Panc1 (cell line): ENCODE measurements at regions of chr11 and their contacts with region 1.

Region 1: DNA sequence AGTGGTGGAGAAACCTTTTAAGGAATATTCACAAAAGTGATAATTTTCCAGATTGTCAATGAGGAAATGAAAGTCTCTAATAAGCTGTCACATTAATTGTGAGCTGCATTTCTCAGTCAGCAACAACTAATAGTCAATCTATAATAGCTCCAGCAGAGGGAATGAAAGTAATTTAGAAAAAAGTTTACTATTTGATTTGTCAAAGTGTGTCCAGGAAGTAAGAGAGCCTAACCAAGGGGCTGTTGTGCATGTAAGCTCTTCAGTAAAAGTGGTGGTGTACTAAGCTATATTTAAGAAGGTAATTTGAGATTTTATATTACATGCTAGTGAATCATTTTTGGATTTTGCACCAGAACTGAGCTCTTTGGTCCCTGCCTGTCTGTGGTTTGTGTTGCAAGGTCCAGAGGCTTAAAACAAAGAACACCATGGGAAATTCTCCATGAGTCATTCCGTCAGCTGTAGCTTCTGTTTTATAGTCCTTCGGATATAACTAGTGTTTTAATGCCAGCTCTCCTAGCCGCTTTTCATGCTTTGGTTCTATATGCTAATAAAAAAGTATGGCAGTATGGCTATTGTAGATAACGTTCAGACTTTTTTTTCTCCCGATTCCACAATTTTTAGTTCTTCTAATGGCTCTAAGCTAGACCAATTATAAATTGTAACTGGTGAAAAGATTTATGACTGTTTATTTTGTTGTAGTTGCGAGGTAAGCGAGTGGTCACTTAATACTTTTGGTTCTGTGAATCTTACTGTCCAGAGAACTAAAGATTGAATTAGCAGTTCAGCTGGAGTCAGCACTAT is 64.6 kb downstream of the ARHGEF12 start:
- DNase-seq: peak; percentile 81
- ATAC-seq: peak; percentile 95
- H3K4me3 ChIP-seq: peak overlapping the region; percentile 39 to 45
- H3K27ac ChIP-seq: peak overlapping the region; percentile 99
- H3K4me1 ChIP-seq: peaks cover 92% of the 10 kb centered on the region
- H3K27me3 ChIP-seq: no peaks in the 10 kb centered on the region
- CTCF ChIP-seq: no peak

Region 2: DNA sequence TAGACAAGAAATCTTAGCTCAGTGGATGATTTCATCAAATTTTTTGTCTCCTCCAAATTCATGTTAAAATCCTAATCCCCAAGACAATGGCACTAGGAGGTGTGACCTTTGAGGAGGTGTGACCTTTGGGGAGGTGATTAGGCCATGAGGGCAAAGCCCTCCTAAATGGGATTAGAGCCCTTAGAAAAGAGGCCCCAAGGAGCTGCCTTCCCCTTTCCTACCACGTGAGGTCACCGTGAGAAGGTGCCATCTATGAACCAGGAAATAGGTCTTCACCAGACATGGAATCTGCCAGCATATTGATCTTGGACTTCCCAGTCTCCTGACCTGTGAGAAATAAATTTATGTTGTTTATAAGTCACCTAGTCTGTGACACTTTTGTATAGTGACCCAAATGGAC is 401.5 kb before region 1 on chr11:
- CTCF ChIA-PET with region 1: no interaction called
- POLR2A ChIA-PET with region 1: no interaction called
- in situ Hi-C with region 1: no loop called
- intact Hi-C with region 1: no loop called
- DNase-seq: no peak
- ATAC-seq: no peak
- H3K4me3 ChIP-seq: no peak overlapping the region
- H3K27ac ChIP-seq: no peak overlapping the region
- H3K4me1 ChIP-seq: no peaks in the 10 kb centered on the region
- H3K27me3 ChIP-seq: peaks cover 25% of the 10 kb centered on the region
- CTCF ChIP-seq: no peak

Region 3: GRCh38 chr11:120410622-120411380 is 10.0 kb after region 1 on chr11:
- CTCF ChIA-PET with region 1: no interaction called
- POLR2A ChIA-PET with region 1: interaction called, 25 read pairs
- in situ Hi-C with region 1: no loop called
- intact Hi-C with region 1: no loop called
- DNase-seq: no peak
- ATAC-seq: no peak
- H3K4me3 ChIP-seq: no peak overlapping the region
- H3K27ac ChIP-seq: peak overlapping the region; percentile 14; the same call in 1 of the 2 replicates
- H3K4me1 ChIP-seq: peaks cover 29% of the 10 kb centered on the region
- H3K27me3 ChIP-seq: no peaks in the 10 kb centered on the region
- CTCF ChIP-seq: no peak

Region 4: DNA sequence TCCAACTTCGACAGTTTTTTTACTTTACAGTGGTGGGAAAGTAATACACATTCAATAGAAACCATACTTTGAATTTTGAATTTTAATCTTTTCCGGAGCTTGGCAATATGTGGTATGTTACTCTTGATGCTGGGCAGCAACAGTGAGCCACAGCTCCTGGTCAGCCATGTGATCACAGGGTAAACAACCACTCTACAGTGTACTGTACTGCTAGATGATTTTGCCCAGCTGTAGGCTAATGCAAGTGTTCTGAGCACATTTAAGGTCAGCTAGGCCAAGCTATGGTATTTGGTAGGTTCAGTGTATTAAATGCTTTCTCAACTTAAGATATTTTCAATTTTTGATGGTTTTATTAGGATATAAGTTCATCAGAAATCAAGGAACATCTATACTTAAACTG is 62.1 kb after region 1 on chr11:
- CTCF ChIA-PET with region 1: no interaction called
- POLR2A ChIA-PET with region 1: interaction called, 11 read pairs
- in situ Hi-C with region 1: no loop called
- intact Hi-C with region 1: no loop called
- DNase-seq: no peak
- ATAC-seq: no peak
- H3K4me3 ChIP-seq: no peak overlapping the region
- H3K27ac ChIP-seq: no peak overlapping the region
- H3K4me1 ChIP-seq: no peaks in the 10 kb centered on the region
- H3K27me3 ChIP-seq: no peaks in the 10 kb centered on the region
- CTCF ChIP-seq: no peak

Region 5: DNA sequence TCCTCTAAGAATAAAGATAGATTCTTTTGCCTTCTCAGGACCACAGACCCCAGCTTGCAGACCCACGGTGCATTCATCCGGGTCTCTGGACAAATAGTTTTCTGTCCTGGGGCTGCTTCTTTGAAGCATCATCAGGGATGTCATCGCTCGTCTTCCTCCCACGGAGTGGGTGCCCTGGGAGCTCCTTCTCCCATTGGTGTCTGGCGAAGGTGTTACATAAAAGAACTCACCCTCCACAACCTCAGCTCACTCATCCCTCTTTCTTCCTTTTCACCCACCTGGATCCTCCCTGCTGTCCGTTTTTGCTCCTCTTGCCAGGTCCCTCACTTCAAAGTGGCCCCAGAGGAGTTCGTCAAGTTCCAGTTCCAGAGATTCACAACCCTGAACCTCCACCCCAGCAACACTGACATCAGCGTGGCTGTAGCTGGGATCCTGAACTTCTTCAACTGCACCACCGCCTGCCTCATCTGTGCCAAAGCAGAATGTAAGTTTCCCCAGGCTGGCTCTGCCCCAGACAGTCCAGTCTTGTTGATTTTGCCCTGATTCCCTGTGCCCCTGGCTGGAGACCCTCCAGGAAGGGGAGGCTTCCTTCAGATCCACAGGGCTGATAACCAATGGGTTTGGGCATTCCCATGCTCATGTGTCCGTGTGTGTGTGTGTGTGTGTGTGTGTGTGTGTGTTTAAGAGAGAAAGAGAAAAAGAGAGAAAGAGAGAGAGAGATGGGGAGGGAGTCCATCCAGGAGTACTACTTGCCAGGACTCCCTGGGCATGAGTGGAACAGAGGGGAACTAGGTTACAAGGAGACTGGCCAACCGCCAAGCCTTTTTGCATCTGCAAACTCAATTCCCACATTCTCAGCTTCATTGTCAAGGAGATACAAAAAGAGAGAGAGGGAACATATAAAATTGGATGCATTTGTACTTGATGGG is 418.9 kb after region 1 on chr11:
- CTCF ChIA-PET with region 1: no interaction called
- POLR2A ChIA-PET with region 1: no interaction called
- in situ Hi-C with region 1: no loop called
- intact Hi-C with region 1: no loop called
- DNase-seq: no peak
- ATAC-seq: no peak
- H3K4me3 ChIP-seq: no peak overlapping the region
- H3K27ac ChIP-seq: no peak overlapping the region
- H3K4me1 ChIP-seq: peaks cover 4% of the 10 kb centered on the region
- H3K27me3 ChIP-seq: peaks cover 10% of the 10 kb centered on the region
- CTCF ChIP-seq: no peak